Mammary epithelial cell (primary cell): ENCODE measurements at regions of chr20 and their contacts with region 1.

Region 1: GRCh38 chr20:63420359-63421093 is 51.9 kb downstream of the KCNQ2 start:
- DNase-seq: no peak
- H3K4me3 ChIP-seq: no peak overlapping the region
- H3K27ac ChIP-seq: no peak overlapping the region
- H3K4me1 ChIP-seq: no peaks in the 10 kb centered on the region
- H3K27me3 ChIP-seq: peaks cover 26% of the 10 kb centered on the region
- CTCF ChIP-seq: no peak

Region 2: DNA sequence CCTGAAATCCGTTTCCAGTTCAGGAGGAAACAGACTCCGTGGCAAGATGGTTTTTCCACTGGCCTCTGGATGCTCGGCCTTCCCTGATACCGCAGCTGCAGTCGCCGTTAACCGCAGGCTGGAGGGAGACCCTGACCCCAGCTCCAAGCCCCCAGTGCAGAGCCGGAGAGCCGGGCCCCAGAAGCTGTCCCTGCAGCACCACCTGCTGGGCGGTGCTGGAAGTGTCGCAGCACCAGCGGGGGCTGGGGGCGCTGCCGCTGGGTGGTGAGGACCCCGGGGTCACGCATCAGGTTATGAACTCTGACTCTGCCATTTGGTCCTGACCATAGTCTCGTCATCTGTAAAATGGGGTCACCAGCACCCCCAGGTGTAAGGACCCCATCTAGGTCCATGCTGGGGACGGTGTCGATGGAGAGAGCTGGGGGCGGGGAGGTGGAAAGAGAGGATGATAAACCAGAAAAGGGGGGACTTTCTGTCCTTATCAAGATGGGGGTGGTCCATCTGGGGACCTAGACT is 38.7 kb before region 1 on chr20:
- CTCF ChIA-PET with region 1: no interaction called
- dilution Hi-C with region 1: loop called (anchors 5 kb)
- in situ Hi-C with region 1: no loop called
- intact Hi-C with region 1: no loop called
- DNase-seq: no peak
- H3K4me3 ChIP-seq: no peak overlapping the region
- H3K27ac ChIP-seq: no peak overlapping the region
- H3K4me1 ChIP-seq: no peaks in the 10 kb centered on the region
- H3K27me3 ChIP-seq: peaks cover 5% of the 10 kb centered on the region
- CTCF ChIP-seq: peak; percentile 85 to 91

Region 3: DNA sequence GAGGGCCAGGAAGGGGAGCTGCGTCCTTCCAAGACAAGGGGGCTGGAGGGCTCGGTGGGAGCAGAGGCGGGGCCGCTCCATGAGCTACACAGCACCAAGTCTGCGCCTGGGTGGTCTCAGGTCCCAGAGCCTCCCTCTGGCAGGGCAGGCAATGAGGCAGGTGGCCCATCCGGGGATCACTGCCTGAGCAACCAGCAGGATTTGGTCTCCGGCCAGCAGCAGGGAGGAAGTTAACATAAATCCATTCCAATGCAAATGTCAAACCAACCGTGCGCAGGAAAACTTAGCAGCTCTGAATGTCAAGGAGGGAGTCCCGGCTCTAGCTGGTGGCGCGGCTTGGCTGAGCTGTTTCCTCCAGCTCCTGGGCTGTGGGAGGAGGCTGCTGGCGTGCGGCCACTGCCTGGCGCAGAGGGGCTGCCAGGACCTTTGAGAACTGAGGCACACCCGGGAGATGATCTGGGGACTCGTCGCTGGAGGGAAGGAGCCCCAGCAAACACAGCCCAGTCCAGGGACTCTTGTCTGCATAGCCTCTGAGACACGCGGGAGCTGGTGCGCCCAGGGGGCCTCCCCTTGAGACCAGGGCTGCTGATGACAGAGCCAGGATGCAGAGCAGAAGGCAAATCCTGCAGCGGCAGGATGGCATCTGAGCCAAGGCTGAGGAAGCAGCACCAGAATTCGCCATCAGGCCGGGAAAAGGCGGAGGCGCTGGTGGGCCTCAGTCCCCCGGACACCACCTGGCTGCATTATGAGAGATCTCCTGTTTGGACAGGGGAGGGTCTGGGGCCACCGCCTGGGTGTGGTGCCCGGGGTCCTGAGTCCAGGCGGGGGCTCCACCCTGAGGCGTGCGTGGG is 26.2 kb before region 1 on chr20:
- CTCF ChIA-PET with region 1: no interaction called
- dilution Hi-C with region 1: no loop called
- in situ Hi-C with region 1: no loop called
- intact Hi-C with region 1: no loop called
- DNase-seq: no peak
- H3K4me3 ChIP-seq: no peak overlapping the region
- H3K27ac ChIP-seq: no peak overlapping the region
- H3K4me1 ChIP-seq: no peaks in the 10 kb centered on the region
- H3K27me3 ChIP-seq: peaks cover 4% of the 10 kb centered on the region
- CTCF ChIP-seq: no peak

Region 4: GRCh38 chr20:63508072-63508768 is 87.7 kb after region 1 on chr20:
- CTCF ChIA-PET with region 1: no interaction called
- dilution Hi-C with region 1: loop called (anchors 5 kb)
- in situ Hi-C with region 1: no loop called
- intact Hi-C with region 1: no loop called
- DNase-seq: no peak
- H3K4me3 ChIP-seq: no peak overlapping the region
- H3K27ac ChIP-seq: no peak overlapping the region
- H3K4me1 ChIP-seq: no peaks in the 10 kb centered on the region
- H3K27me3 ChIP-seq: peaks cover 2% of the 10 kb centered on the region
- CTCF ChIP-seq: no peak

Region 5: DNA sequence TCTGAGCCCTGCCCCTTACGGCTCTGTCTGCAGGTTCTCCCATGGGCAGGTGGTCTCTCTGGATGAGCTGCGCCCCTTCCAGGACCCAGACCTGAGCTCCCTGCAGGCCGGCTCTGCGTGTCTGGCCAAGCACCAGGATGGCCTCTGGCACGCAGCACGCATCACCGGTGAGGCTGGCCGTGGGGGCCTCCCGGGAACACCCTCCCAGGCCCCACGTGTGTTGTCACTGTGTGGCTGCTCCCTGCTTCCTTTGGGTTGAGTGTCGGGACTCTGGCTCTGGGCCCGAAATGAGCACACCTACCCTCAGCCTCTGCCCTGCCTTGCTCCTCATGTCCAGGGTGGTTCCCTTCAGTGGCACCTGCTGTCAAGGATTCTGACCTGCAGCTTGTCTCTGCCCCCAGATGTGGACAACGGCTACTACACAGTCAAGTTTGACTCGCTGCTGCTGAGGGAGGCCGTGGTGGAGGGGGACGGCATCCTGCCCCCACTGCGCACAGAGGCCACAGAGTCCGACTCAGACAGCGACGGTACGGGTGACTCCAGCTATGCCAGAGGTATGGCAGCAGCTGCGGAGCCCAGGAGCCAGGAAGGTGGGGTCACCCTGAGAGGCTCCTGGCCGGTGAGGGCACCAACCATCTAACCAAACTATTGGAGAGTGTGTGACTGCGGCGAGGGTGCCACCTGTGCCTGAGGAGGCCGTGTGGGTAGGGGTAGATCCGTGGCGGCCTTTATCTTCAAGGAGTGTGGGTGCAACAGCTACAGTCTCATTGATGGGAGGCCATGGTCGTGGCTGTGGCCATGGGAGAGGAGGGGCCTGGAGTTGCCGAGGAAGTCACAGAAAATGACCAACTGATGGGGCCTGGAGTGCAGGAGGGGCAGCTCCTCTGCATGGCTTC is 312.9 kb after region 1 on chr20:
- CTCF ChIA-PET with region 1: no interaction called
- dilution Hi-C with region 1: no loop called
- in situ Hi-C with region 1: no loop called
- intact Hi-C with region 1: no loop called
- DNase-seq: no peak
- H3K4me3 ChIP-seq: no peak overlapping the region
- H3K27ac ChIP-seq: no peak overlapping the region
- H3K4me1 ChIP-seq: peaks cover 18% of the 10 kb centered on the region
- H3K27me3 ChIP-seq: no peaks in the 10 kb centered on the region
- CTCF ChIP-seq: no peak